ENCODE measurements at regions of chr4 and their contacts with region 1.

Region 1: GRCh38 chr4:48830706-48831531 is at the start of gene OCIAD1:
- DNase-seq: peak; percentile 97 to 98
- ATAC-seq: peak; percentile 100
- H3K4me3 ChIP-seq: peak within 1 kb of the TSS; percentile 69 to 75
- H3K27ac ChIP-seq: peak within 1 kb of the TSS; percentile 9 to 80
- H3K4me1 ChIP-seq: peaks cover 0 to 6% of the 10 kb centered on the region in 2 donors
- H3K27me3 ChIP-seq: no peaks in the 10 kb centered on the region
- total RNA-seq, gene OCIAD1: 81.5 to 102 TPM

Region 2: DNA sequence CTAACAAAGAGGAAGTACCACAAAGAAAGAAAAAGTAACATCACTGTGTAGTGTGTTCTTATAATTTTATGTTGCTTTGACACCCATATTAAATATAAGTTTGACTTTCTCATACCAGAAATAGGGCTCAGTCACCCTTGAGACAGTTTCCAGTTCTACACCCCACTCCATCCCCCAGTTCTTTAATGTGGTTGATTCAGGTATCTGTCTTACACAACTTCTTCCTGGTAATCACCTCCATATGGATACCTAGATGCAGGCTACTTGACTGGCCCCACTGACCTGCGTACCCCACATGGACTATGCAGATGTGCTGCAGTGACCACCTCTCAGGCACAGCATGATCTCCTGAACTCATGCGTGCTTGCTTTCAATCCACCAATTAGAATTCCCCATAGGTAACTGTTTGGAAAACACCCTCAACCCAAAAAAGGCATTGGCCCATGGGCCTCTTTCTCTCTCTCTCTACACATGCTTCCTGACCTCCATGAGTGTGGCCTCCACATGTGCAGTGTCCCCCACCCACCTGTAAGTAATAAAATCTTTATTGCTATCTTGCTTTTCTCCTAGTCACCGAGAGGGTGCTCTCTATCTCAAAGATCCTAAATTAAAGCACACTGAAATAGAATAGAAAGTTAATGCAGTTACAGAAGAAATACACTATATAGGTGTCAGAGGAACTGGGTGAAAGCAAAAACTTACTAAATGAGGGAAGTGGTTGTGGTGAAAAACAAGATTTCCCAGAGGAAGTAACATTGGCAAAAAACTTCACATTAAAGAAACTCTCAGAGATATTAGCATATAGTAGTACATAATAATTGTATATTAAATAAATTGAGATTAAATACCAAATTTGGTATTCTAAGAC is 242.5 kb before region 1 on chr4:
- intact Hi-C with region 1: loop called in 1 of 2 experiments (anchors 10 kb)
- DNase-seq: no peak
- ATAC-seq: no peak
- H3K4me3 ChIP-seq: no peak overlapping the region
- H3K27ac ChIP-seq: no peak overlapping the region
- H3K4me1 ChIP-seq: no peaks in the 10 kb centered on the region
- H3K27me3 ChIP-seq: no peaks in the 10 kb centered on the region

Region 3: GRCh38 chr4:48692897-48693296 is 138.0 kb before region 1 on chr4:
- intact Hi-C with region 1: no loop called
- DNase-seq: no peak
- ATAC-seq: no peak
- H3K4me3 ChIP-seq: no peak overlapping the region
- H3K27ac ChIP-seq: no peak overlapping the region
- H3K4me1 ChIP-seq: no peaks in the 10 kb centered on the region
- H3K27me3 ChIP-seq: no peaks in the 10 kb centered on the region

Region 4: DNA sequence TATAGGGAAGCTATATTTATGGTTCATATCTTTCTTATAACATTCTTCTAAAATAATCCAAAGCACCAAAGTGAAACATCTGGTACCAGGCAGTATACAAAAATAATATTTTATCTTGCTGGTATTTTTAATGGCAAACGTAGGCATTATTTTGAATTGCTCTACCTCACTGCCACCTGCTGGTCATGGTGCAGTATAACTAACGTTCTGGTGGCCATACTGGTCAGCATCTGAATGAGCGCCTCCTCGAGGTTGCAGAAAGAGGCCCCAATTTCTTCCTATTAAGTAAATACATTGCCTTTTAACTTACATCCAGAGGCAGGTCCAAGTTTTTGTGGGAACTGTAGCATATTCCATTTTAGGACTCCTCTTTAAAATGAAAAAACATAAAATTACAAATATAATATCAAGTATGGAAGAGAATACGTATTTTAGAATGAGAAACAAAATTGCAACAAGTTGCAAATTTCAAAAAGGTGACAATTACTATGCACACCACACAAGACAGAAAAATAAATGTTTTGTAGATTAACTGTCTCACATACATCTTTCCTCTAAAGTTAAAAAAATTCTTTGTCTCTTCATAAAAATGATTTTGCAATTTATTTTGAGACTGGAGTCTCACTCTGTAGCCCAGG is 132.2 kb after region 1 on chr4:
- intact Hi-C with region 1: loop called in 1 of 2 experiments (anchors 2 kb)
- DNase-seq: peak; percentile 77 to 78
- ATAC-seq: peak; percentile 81
- H3K4me3 ChIP-seq: no peak overlapping the region
- H3K27ac ChIP-seq: no peak overlapping the region
- H3K4me1 ChIP-seq: no peaks in the 10 kb centered on the region
- H3K27me3 ChIP-seq: no peaks in the 10 kb centered on the region